ENCODE measurements at regions of chr22 and their contacts with region 1.

Region 1: DNA sequence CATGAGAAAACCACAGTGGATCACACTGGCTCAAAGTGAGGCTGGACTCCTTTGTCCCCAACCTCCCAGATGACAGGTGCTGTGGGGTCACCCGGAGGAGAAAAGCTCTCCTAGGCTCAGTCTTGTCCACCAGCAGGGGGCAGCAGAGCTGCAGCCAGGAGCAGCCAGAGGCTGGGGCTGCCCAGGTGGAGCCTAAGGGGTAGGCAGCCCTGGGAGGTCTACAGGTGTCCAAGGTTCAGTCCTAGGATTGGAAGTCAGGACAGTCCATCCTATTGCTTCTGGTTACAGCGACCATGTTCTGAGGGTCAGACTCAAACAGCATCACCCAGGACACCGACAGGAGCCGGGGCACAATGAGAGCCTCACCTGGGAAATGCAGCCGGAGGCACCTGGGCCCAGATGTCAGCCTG is 77.6 kb upstream of the IGLL5 start:
- DNase-seq: no peak
- H3K4me3 ChIP-seq: no peak overlapping the region
- CTCF ChIP-seq: peak; percentile 81

Region 2: GRCh38 chr22:22838148-22838786 is 28.2 kb after region 1 on chr22:
- CTCF ChIA-PET with region 1: no interaction called
- POLR2A ChIA-PET with region 1: no interaction called
- DNase-seq: no peak
- H3K4me3 ChIP-seq: no peak overlapping the region
- CTCF ChIP-seq: no peak

Region 3: DNA sequence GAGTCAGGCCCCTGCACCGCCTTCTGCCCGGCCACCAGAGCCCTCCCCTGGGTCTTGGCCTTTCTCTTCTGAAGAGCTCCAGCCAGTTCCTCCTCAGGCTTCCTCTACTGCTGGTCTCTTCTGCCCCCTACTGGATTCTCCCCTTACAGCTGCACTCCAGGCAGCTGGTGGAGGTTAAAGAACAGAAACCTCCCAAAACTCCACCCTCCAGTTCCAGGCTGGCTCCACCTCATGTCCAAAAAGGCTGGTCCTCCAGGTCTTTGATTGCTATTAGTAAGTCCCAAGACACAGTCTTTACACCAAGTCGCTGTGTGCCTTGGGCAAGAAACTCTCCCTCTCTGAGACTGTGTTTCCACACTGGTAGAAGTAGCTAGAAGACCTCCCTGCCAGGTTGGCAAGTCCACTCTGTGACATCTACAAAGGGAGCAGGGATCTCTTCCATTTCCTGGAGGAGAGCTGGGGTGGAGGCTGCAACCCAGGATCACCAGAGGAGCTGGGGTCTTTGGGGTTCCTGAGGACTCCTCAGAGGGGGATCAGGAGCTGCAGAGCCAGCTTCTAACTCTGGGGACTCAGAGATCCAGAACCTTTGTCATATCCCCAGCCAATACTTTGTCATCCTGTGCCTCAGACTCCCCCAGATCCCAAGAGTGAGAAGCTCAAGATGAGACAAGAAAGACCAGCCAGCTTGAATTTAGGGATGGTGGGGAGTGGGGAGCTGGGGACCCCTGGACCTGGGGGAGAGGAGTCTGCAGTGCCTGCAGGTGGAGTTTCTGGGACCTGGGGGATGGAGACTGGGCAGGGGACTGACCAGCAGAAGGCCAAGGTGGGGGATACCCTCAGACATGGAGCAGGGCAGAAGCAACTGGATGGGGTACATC is 74.2 kb after region 1 on chr22:
- CTCF ChIA-PET with region 1: interaction called, 11 read pairs
- POLR2A ChIA-PET with region 1: no interaction called
- DNase-seq: no peak
- H3K4me3 ChIP-seq: no peak overlapping the region
- CTCF ChIP-seq: peak; percentile 45

Region 4: GRCh38 chr22:22903355-22903777 is 93.3 kb after region 1 on chr22:
- CTCF ChIA-PET with region 1: no interaction called
- POLR2A ChIA-PET with region 1: no interaction called
- DNase-seq: no peak
- H3K4me3 ChIP-seq: no peak overlapping the region
- CTCF ChIP-seq: no peak

Measured in AG04449 (cell line).